SK-N-SH (cell line): ENCODE measurements at regions of chr5 and their contacts with region 1.

Region 1: GRCh38 chr5:95664204-95664786 is 17.7 kb downstream of the RFESD start:
- DNase-seq: no peak
- H3K4me3 ChIP-seq: no peak overlapping the region; a peak in 1 of 4 replicates
- H3K27ac ChIP-seq: peak overlapping the region; percentile 6 to 34; a peak in 3 of 4 replicates
- H3K4me1 ChIP-seq: peaks cover 0 to 11% of the 10 kb centered on the region in 2 experiments; a peak in 3 of 4 replicates
- H3K27me3 ChIP-seq: no peaks in the 10 kb centered on the region
- CTCF ChIP-seq: peak; percentile 94
- EP300 ChIP-seq: no peak
- RAD21 ChIP-seq: peak; percentile 76

Region 2: GRCh38 chr5:95327211-95327610 is 337.1 kb before region 1 on chr5:
- CTCF ChIA-PET with region 1: no interaction called
- POLR2A ChIA-PET with region 1: no interaction called
- DNase-seq: no peak
- H3K4me3 ChIP-seq: no peak overlapping the region
- H3K27ac ChIP-seq: no peak overlapping the region
- H3K4me1 ChIP-seq: no peaks in the 10 kb centered on the region
- H3K27me3 ChIP-seq: no peaks in the 10 kb centered on the region; the same call in 1 of the 2 replicates
- CTCF ChIP-seq: no peak
- EP300 ChIP-seq: no peak
- RAD21 ChIP-seq: no peak

Region 3: GRCh38 chr5:95697781-95698681 is 33.7 kb after region 1 on chr5:
- CTCF ChIA-PET with region 1: interaction called, 14 read pairs
- POLR2A ChIA-PET with region 1: no interaction called
- DNase-seq: peak; percentile 15
- H3K4me3 ChIP-seq: no peak overlapping the region
- H3K27ac ChIP-seq: no peak overlapping the region
- H3K4me1 ChIP-seq: peaks cover 0 to 5% of the 10 kb centered on the region in 2 experiments; a peak in 2 of 4 replicates
- H3K27me3 ChIP-seq: no peaks in the 10 kb centered on the region
- CTCF ChIP-seq: no peak
- EP300 ChIP-seq: no peak
- RAD21 ChIP-seq: no peak

Region 4: GRCh38 chr5:95730730-95731570 is 66.7 kb after region 1 on chr5 and contains the start of gene RHOBTB3:
- CTCF ChIA-PET with region 1: interaction called, 30 read pairs
- POLR2A ChIA-PET with region 1: interaction called, 4 read pairs
- DNase-seq: peak; percentile 91
- H3K4me3 ChIP-seq: peak within 1 kb of the TSS; percentile 80 to 98
- H3K27ac ChIP-seq: peak within 1 kb of the TSS; percentile 77 to 97
- H3K4me1 ChIP-seq: peaks cover 22 to 38% of the 10 kb centered on the region in 2 experiments; a peak in 3 of 4 replicates
- H3K27me3 ChIP-seq: no peaks in the 10 kb centered on the region
- CTCF ChIP-seq: no peak
- EP300 ChIP-seq: no peak; a peak in 1 of 4 replicates
- RAD21 ChIP-seq: peak; percentile 23; the same call in 1 of the 2 replicates
- polyA plus RNA-seq, gene RHOBTB3: 59.3 and 73.6 TPM in 2 replicates

Region 5: DNA sequence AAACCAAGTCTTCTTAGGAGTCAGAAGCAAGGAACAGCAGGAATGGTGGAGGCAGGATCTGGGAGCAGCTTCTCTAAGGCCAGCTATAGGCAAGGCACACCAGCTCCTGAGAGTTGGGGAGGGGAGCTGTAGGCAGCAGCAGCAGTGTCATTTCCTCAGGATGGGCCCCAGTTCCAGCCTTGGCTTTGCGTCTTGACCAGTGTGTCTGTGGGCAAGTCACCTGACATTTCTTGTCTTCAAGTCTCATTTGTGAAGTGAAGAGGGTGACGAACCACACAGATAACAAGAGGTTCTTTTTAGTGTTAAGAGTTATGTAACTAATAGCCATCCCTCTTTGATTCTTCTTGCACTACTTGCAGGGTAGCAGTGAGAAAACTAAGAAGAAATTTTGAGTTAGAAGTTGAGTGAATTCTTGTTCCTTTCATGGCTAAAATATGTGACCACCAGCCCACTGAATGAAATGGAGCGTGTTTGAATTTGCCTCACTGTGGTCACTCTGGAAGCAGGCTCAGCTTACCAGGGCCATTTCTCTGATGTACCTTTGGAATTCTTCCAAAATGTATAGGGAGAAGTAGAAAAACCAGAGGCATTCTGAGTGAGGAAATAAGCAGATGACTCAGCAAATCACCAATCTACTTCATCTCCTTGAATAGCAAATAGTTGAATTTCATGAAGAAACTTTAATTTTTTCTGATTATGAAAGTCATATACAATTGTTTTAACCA is 109.2 kb after region 1 on chr5:
- CTCF ChIA-PET with region 1: interaction called, 12 read pairs
- POLR2A ChIA-PET with region 1: no interaction called
- DNase-seq: no peak
- H3K4me3 ChIP-seq: no peak overlapping the region
- H3K27ac ChIP-seq: peak overlapping the region; percentile 20 to 53; a peak in 3 of 4 replicates
- H3K4me1 ChIP-seq: peaks cover 9 to 15% of the 10 kb centered on the region in 2 experiments; a peak in 3 of 4 replicates
- H3K27me3 ChIP-seq: no peaks in the 10 kb centered on the region
- CTCF ChIP-seq: no peak
- EP300 ChIP-seq: no peak
- RAD21 ChIP-seq: no peak

Region 6: GRCh38 chr5:96093890-96094381 is 429.6 kb after region 1 on chr5:
- CTCF ChIA-PET with region 1: no interaction called
- POLR2A ChIA-PET with region 1: no interaction called
- DNase-seq: no peak
- H3K4me3 ChIP-seq: no peak overlapping the region
- H3K27ac ChIP-seq: peak overlapping the region in 1 of 2 experiments; percentile 38; a peak in 2 of 4 replicates
- H3K4me1 ChIP-seq: peaks cover 0 to 21% of the 10 kb centered on the region in 2 experiments; a peak in 2 of 4 replicates
- H3K27me3 ChIP-seq: no peaks in the 10 kb centered on the region
- CTCF ChIP-seq: no peak
- EP300 ChIP-seq: no peak
- RAD21 ChIP-seq: no peak